ENCODE measurements at regions of chr16 and their contacts with region 1.

Region 1: GRCh38 chr16:4624015-4624826 is at the start of gene MGRN1:
- DNase-seq: peak; percentile 94
- ATAC-seq: peak; percentile 87
- H3K4me3 Mint-ChIP-seq: peak within 1 kb of the TSS; percentile 99
- H3K27ac Mint-ChIP-seq: peak within 1 kb of the TSS; percentile 98
- H3K4me1 Mint-ChIP-seq: peaks cover 37% of the 10 kb centered on the region
- H3K27me3 Mint-ChIP-seq: no peaks in the 10 kb centered on the region
- CTCF ChIP-seq: peak; percentile 95
- total RNA-seq, gene MGRN1: 67.6 to 70.8 TPM

Region 2: DNA sequence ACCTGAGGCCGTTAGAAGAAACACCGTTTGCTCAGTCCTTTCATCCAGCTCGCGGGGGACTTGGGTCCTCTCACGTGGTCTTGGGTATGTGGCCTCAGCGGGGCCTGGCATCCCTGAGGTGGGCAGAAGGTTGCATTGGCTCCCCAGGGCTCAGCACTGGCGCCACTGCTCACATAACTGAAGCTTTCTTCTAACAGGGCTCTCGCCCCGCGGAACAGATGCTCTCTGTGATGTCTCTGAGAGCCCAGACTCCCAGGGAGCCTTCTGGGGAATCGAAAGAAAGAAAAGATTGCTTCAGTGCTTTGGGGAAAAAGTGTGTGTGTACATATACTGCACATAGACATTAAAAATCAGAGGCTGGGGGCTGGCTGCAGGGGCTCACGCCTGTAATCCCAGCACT is 10.5 kb after region 1 on chr16:
- CTCF ChIA-PET with region 1: interaction called, 10 read pairs
- POLR2A ChIA-PET with region 1: interaction called, 7 read pairs
- intact Hi-C with region 1: no loop called
- DNase-seq: no peak
- ATAC-seq: no peak
- H3K4me3 Mint-ChIP-seq: no peak overlapping the region
- H3K27ac Mint-ChIP-seq: no peak overlapping the region
- H3K4me1 Mint-ChIP-seq: peaks cover 20% of the 10 kb centered on the region
- H3K27me3 Mint-ChIP-seq: no peaks in the 10 kb centered on the region
- CTCF ChIP-seq: no peak

Region 3: DNA sequence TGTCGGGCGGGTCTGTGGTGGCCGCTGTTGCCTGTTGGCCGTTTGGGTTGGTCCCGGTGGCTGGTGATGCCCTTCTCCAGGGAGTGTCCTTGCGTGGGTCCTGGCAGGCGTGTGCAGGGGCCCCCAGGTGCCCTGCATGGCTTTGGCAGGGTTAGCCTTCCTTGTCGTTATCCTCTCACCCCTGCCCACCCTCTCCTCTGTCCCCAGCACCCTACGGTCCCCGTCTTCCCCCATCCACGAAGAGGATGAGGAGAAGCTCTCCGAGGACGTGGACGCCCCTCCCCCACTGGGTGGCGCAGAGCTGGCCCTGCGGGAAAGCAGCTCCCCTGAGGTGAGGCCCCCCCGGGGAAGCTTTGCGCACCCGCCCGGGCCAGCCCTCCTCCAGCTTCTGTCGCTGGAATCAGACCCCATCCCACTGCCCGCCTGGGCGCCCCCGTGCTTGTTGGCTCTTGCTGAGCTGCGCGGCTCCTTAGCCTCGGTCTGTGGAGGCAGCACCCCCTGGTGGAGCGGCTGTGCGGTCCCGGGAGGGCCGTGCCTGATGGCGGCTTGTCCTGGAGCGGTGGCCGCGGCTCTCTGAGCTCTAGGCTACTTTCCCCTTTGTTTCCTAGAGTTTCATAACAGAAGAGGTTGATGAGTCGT is 58.5 kb after region 1 on chr16:
- CTCF ChIA-PET with region 1: no interaction called
- POLR2A ChIA-PET with region 1: no interaction called
- intact Hi-C with region 1: no loop called
- DNase-seq: peak; percentile 64
- ATAC-seq: peak; percentile 67
- H3K4me3 Mint-ChIP-seq: no peak overlapping the region
- H3K27ac Mint-ChIP-seq: peak overlapping the region; percentile 39
- H3K4me1 Mint-ChIP-seq: peaks cover 18% of the 10 kb centered on the region
- H3K27me3 Mint-ChIP-seq: no peaks in the 10 kb centered on the region
- CTCF ChIP-seq: peak; percentile 31

Region 4: DNA sequence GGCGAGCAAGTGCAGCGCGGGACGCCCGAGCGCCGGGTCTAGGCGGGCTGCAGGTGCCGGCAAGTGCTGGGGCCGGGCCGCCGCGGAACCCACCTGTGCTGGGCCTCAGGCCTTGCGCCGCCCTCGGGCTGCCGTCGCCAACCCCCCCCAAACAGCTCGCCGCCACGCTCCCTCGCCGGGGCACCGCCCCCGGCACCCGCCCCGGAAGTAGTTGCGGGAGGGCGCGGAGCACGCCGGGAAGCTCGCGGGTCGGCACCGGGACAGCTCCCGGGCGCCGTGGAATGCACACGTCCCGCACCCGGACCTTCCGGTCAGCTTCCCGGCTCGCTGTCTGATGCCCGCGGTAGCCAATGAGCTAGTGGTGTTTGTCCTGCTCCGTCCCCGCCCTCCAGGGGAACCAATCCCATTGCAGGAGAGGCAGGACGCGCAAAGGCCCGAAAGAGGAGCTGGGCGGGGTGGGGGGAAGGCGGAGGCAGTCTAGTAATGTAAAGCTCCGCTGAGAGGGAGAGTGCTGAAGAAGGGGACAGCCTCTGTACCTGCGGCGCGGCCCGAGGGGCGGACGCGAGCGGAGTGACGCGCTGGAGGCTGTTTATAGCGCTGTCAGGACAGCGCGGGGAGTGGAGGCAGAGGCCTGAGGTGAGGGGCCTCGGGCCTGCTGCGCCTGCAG is 110.0 kb after region 1 on chr16 and contains the starts of genes ANKS3 and DNAAF8:
- CTCF ChIA-PET with region 1: interaction called, 12 read pairs
- POLR2A ChIA-PET with region 1: no interaction called
- intact Hi-C with region 1: no loop called
- DNase-seq: peak; percentile 86
- ATAC-seq: peak; percentile 81
- H3K4me3 Mint-ChIP-seq: peak within 1 kb of the TSS; percentile 88
- H3K27ac Mint-ChIP-seq: peak within 1 kb of the TSS; percentile 75
- H3K4me1 Mint-ChIP-seq: peaks cover 16% of the 10 kb centered on the region
- H3K27me3 Mint-ChIP-seq: no peaks in the 10 kb centered on the region
- CTCF ChIP-seq: no peak
- total RNA-seq, gene ANKS3: 13.0 to 13.8 TPM
- total RNA-seq, gene DNAAF8: 0.18 to 0.38 TPM